Activated CD8-positive, alpha-beta memory T cell treated with anti-CD3 and anti-CD28 coated beads, Interleukin-2, amount 10 ng/mL, durations not matched to agents 7 days and 5 days (primary cell): ENCODE measurements at regions of chr14 and their contacts with region 1.

Region 1: DNA sequence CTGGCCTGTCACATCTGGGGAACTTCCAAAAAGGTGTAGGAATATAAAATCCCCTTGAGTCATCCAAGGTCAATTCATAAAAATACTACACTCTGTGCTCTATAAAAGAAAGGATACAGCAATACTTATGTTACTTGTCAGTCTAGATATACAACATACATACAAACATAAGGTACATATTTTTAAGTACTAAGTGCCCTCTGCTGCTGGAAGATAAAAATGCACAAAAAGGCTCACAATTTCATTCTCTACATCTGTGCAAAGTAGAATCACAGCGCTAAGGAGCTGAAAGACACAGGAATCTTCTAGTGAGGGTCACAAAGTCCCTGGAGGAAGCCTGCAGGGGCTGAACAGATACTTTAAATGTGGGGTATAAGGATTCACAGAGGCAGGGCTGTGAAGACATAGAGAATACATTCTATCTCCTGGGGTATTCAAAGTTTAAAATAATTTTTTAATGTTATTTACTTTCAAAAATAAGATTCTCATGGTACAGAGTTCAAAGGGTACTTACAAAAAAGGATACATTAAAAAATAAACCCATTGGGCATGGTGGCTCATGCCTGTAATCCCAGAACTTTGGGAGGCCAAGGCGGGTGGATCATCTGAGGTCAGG is 10.2 kb upstream of the GOLGA5 start:
- DNase-seq: peak; percentile 48
- ATAC-seq: peak; percentile 77
- H3K4me3 Mint-ChIP-seq: no peak overlapping the region
- H3K27ac Mint-ChIP-seq: no peak overlapping the region
- H3K4me1 Mint-ChIP-seq: peaks cover 16% of the 10 kb centered on the region
- H3K27me3 Mint-ChIP-seq: peaks cover 4% of the 10 kb centered on the region

Region 2: GRCh38 chr14:92712654-92713051 is 71.3 kb before region 1 on chr14:
- CTCF ChIA-PET with region 1: interaction called, 43 read pairs
- DNase-seq: no peak
- ATAC-seq: no peak
- H3K4me3 Mint-ChIP-seq: no peak overlapping the region
- H3K27ac Mint-ChIP-seq: no peak overlapping the region
- H3K4me1 Mint-ChIP-seq: peaks cover 7% of the 10 kb centered on the region
- H3K27me3 Mint-ChIP-seq: peaks cover 4% of the 10 kb centered on the region

Region 3: GRCh38 chr14:92737206-92737605 is 46.7 kb before region 1 on chr14:
- CTCF ChIA-PET with region 1: no interaction called
- DNase-seq: no peak
- ATAC-seq: no peak
- H3K4me3 Mint-ChIP-seq: no peak overlapping the region
- H3K27ac Mint-ChIP-seq: no peak overlapping the region
- H3K4me1 Mint-ChIP-seq: peaks cover 5% of the 10 kb centered on the region
- H3K27me3 Mint-ChIP-seq: peaks cover 67% of the 10 kb centered on the region

Region 4: DNA sequence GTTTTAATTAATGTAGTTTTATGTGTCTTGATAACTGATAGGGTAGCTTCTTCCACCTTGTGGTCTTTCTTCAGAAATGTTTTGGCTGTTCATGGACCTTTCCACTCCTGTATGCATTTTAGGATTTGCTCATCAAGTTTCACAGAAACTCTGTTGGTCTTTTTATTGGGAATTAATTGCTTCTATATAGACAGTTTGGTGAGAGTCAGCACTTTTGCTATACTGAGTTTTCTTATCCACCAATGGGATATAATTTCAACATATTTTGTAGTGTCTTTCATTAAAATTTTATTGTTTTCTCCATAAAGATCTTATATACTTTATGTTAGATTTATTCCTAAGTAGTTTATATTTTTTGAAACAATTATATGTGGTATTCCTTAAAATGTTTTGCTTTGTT is 18.0 kb after region 1 on chr14:
- CTCF ChIA-PET with region 1: no interaction called
- DNase-seq: no peak
- ATAC-seq: no peak
- H3K4me3 Mint-ChIP-seq: no peak overlapping the region
- H3K27ac Mint-ChIP-seq: no peak overlapping the region
- H3K4me1 Mint-ChIP-seq: peaks cover 42% of the 10 kb centered on the region
- H3K27me3 Mint-ChIP-seq: no peaks in the 10 kb centered on the region